Cardiac septum (tissue), 1 donor: ENCODE measurements at regions of chr2 and their contacts with region 1.

Region 1: DNA sequence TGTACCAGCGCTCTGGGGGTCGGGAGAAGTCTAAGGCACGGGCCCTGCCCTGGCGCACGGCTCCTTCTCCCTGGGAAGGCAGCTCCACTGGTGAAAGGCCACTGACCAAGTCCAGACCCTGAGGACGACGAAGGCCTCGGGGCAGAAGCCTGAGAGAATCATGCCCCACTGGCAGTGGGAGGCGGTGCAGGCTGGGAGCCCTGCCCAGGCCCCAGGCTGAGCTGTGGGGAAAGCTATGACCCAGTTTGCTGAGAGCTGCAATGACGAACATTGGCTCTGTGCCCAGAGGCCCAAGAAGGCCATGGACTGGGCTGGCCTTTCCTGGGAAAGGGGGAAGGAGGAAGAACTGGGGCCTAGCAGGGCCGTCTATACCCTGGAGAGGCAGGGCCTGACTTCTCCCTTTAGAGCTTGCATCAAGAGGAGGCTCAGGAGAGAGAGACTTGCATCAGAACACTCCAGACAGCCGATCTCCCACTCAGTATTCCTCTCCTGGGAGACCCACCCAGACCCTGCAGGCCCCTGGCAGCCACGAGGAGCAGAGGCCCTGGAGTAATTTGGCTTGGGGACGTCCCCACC is 32.9 kb downstream of the HS1BP3 start:
- DNase-seq: peak; percentile 97

Region 2: GRCh38 chr2:20578895-20579825 is 38.8 kb before region 1 on chr2:
- intact Hi-C with region 1: loop called (anchors 2 kb)
- DNase-seq: peak; percentile 90

Region 3: GRCh38 chr2:20599861-20600461 is 18.0 kb before region 1 on chr2:
- intact Hi-C with region 1: loop called (anchors 2 kb)
- DNase-seq: peak; percentile 62

Region 4: DNA sequence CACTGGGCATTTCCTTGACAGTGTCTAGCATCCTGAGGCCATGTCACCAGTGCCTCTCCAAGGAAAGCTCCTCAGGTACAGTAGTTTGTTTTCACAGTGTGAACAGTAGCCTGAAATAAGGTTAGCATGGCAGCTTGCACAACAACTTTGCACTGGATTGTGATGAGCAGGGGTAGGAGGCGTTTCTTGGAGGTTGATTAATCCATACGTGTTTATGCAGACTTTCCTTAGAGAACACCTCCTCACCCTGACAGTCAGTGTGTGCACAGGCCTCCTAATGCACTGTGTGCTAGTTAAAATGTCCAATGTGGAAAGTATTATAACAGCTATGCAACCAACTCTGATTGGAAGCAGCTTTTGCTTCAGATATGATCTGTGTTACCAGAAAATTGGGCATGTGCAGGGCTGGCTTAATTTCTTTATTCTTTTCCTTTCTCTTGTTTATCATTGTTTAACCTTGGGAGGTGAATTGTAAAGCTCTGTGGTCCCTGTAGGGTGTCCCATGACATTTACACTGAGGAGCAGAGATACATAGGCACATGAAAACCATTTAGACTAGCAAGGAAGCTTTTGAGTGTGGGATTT is 282.2 kb after region 1 on chr2:
- intact Hi-C with region 1: no loop called
- DNase-seq: no peak